Naive thymus-derived CD4-positive, alpha-beta T cell (primary cell): ENCODE measurements at regions of chr5 and their contacts with region 1.

Region 1: DNA sequence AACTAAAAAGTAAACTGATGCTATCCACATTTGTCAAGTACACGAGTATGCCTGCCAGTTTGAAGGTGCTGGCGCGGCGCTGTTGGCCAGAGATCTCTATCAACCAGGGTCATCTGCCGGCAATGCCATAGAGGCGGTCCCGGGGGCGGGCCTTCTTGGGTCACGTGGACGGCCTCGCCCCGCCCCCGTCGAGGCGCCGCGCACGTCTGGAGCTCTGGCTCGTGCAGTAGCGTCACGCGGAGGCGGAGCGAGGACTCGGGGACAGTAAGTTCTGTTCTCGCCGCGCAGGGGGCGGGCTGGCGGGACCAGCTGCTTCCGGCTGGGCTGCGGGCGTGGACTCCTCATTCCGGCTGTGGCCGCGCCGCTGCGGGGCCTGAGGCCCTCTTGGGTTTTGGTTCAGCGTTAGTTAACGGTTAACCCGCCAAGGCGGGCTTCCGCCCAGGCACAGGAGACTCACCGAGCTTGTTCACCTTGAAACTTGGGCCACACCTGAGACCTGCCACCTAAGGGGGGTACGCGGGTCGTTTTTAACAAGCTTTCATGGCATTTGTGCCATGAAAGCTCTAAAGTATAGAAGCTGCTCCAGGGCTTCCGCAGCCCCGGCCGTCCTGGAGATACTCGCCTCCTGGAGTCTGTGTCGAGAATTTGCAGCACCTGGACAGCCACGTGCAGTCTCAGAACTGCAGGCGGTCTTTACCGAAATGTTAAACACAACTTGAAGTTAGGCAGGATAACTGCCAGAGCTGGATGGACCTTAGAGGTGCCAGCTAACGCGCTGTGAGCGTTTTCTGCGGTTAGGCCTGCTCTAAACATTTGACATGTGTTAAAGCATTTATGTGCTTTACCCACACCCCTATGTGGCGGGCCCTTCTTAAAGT is at the start of gene RFESD:
- DNase-seq: peak; percentile 84 to 94 (median 90)
- ATAC-seq: peak; percentile 98
- H3K4me3 ChIP-seq: peak within 1 kb of the TSS; percentile 80
- H3K4me3 Mint-ChIP-seq: peak within 1 kb of the TSS; percentile 84 to 93 (median 88)
- H3K27ac ChIP-seq: peak within 1 kb of the TSS; percentile 80
- H3K27ac Mint-ChIP-seq: peak within 1 kb of the TSS; percentile 71 to 95 (median 89)
- H3K4me1 ChIP-seq: peaks cover 0 to 18% of the 10 kb centered on the region in 2 donors
- H3K4me1 Mint-ChIP-seq: peaks cover 7 to 53% (median 40%) of the 10 kb centered on the region in 7 donors
- H3K27me3 ChIP-seq: no peaks in the 10 kb centered on the region
- H3K27me3 Mint-ChIP-seq: no peaks in the 10 kb centered on the region
- total RNA-seq, gene RFESD: 2.2 to 9.2 (median 6.5) TPM

Region 2: DNA sequence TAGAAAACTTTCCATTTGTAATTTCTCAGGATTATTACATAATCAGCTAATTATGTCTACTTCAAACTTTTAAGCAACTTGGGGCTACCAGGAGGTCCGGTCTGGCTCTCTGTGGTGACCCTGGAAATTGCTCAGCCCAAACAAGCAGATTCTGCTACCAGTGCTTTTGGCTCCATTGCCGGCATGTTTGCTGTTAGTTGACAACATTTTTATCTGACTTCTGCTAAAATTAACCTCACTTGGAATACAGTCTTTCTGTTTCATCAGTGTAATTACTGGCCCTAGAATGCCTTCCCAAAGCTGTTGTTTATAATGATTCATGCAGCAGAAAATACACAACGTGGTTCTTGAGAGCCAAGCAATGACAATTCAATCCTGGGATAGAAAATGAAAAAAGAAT is 294.1 kb before region 1 on chr5:
- CTCF ChIA-PET with region 1: no interaction called
- POLR2A ChIA-PET with region 1: no interaction called
- intact Hi-C with region 1: no loop called
- DNase-seq: no peak
- ATAC-seq: no peak
- H3K4me3 ChIP-seq: no peak overlapping the region
- H3K4me3 Mint-ChIP-seq: no peak overlapping the region
- H3K27ac ChIP-seq: no peak overlapping the region
- H3K27ac Mint-ChIP-seq: no peak overlapping the region
- H3K4me1 ChIP-seq: no peaks in the 10 kb centered on the region
- H3K4me1 Mint-ChIP-seq: no peaks in the 10 kb centered on the region
- H3K27me3 ChIP-seq: no peaks in the 10 kb centered on the region
- H3K27me3 Mint-ChIP-seq: peaks cover 0 to 21% (median 0%) of the 10 kb centered on the region in 5 donors

Region 3: DNA sequence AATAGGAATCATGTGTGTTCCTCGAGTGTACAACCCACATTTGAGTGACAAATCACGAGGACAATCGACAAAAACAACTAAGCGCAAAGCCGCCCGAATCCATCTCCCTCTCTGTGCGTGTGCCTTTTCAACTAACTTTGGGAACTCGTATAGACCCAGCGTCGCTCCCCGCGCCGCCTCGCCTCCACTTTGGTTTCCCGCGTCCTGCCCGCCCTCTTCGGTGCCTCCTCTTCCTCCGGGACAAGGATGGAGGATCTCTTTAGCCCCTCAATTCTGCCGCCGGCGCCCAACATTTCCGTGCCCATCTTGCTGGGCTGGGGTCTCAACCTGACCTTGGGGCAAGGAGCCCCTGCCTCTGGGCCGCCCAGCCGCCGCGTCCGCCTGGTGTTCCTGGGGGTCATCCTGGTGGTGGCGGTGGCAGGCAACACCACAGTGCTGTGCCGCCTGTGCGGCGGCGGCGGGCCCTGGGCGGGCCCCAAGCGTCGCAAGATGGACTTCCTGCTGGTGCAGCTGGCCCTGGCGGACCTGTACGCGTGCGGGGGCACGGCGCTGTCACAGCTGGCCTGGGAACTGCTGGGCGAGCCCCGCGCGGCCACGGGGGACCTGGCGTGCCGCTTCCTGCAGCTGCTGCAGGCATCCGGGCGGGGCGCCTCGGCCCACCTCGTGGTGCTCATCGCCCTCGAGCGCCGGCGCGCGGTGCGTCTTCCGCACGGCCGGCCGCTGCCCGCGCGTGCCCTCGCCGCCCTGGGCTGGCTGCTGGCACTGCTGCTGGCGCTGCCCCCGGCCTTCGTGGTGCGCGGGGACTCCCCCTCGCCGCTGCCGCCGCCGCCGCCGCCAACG is 26.5 kb before region 1 on chr5 and contains the start of gene GPR150:
- CTCF ChIA-PET with region 1: interaction called, 31 read pairs
- POLR2A ChIA-PET with region 1: interaction called, 67 read pairs
- intact Hi-C with region 1: loop called (anchors 1 kb)
- DNase-seq: peak; percentile 44 to 67 (median 61)
- ATAC-seq: peak; percentile 77
- H3K4me3 ChIP-seq: peak within 1 kb of the TSS; percentile 75
- H3K4me3 Mint-ChIP-seq: peak within 1 kb of the TSS; percentile 88 to 96 (median 92)
- H3K27ac ChIP-seq: peak within 1 kb of the TSS; percentile 71
- H3K27ac Mint-ChIP-seq: peak within 1 kb of the TSS; percentile 60 to 87 (median 81)
- H3K4me1 ChIP-seq: peaks cover 22 to 46% of the 10 kb centered on the region in 2 donors
- H3K4me1 Mint-ChIP-seq: peaks cover 34 to 82% (median 67%) of the 10 kb centered on the region in 7 donors
- H3K27me3 ChIP-seq: no peaks in the 10 kb centered on the region
- H3K27me3 Mint-ChIP-seq: peaks cover 0 to 18% (median 0%) of the 10 kb centered on the region in 5 donors
- total RNA-seq, gene GPR150: 0.48 to 1.5 (median 1.1) TPM

Region 4: DNA sequence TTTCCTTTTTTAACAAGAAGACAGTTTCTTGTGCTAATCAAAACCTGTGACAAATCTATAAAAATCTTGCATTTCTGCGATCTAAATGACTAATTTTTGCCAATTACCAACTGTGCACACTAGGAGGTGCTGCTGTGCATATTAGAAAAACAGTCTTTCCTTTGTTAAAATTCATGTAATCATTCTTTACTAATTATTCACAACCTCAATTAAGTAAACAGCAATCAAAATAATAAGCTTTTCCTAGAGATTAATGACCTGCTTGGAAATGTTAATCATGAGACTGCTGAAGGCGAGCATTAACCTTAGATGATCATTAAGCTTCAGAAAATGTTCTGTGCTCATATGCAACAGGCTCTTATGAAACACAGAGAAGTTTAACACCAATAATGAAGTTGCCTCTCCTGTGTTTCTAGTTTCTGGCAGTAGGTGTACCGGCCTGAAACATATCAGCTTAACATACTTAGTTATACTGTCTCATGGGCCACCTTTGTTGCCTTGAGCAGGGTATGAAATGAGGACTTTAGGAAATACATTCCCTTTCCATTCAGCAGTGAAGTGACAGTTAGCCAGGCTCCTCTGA is 17.5 kb after region 1 on chr5:
- CTCF ChIA-PET with region 1: interaction called, 4 read pairs
- POLR2A ChIA-PET with region 1: no interaction called
- intact Hi-C with region 1: loop called (anchors 1 kb)
- DNase-seq: peak in 5 of 9 donors; percentile 31 to 49 (median 41)
- ATAC-seq: peak; percentile 65
- H3K4me3 ChIP-seq: no peak overlapping the region
- H3K4me3 Mint-ChIP-seq: no peak overlapping the region
- H3K27ac ChIP-seq: no peak overlapping the region
- H3K27ac Mint-ChIP-seq: no peak overlapping the region
- H3K4me1 ChIP-seq: peaks cover 0 to 5% of the 10 kb centered on the region in 2 donors
- H3K4me1 Mint-ChIP-seq: peaks cover 0 to 8% (median 3%) of the 10 kb centered on the region in 7 donors
- H3K27me3 ChIP-seq: no peaks in the 10 kb centered on the region
- H3K27me3 Mint-ChIP-seq: peaks cover 0 to 8% (median 0%) of the 10 kb centered on the region in 5 donors

Region 5: GRCh38 chr5:95760273-95761191 is 113.7 kb after region 1 on chr5:
- CTCF ChIA-PET with region 1: no interaction called
- POLR2A ChIA-PET with region 1: interaction called, 3 read pairs
- intact Hi-C with region 1: loop called (anchors 5 kb)
- DNase-seq: peak in 7 of 9 donors; percentile 3 to 45 (median 32)
- ATAC-seq: peak; percentile 83
- H3K4me3 ChIP-seq: peak overlapping the region; percentile 50
- H3K4me3 Mint-ChIP-seq: peak overlapping the region; percentile 70 to 86 (median 82)
- H3K27ac ChIP-seq: peak overlapping the region; percentile 58
- H3K27ac Mint-ChIP-seq: peak overlapping the region; percentile 75 to 92 (median 90)
- H3K4me1 ChIP-seq: peaks cover 0 to 27% of the 10 kb centered on the region in 2 donors
- H3K4me1 Mint-ChIP-seq: peaks cover 11 to 46% (median 32%) of the 10 kb centered on the region in 7 donors
- H3K27me3 ChIP-seq: no peaks in the 10 kb centered on the region
- H3K27me3 Mint-ChIP-seq: peaks cover 0 to 44% (median 0%) of the 10 kb centered on the region in 5 donors

Region 6: DNA sequence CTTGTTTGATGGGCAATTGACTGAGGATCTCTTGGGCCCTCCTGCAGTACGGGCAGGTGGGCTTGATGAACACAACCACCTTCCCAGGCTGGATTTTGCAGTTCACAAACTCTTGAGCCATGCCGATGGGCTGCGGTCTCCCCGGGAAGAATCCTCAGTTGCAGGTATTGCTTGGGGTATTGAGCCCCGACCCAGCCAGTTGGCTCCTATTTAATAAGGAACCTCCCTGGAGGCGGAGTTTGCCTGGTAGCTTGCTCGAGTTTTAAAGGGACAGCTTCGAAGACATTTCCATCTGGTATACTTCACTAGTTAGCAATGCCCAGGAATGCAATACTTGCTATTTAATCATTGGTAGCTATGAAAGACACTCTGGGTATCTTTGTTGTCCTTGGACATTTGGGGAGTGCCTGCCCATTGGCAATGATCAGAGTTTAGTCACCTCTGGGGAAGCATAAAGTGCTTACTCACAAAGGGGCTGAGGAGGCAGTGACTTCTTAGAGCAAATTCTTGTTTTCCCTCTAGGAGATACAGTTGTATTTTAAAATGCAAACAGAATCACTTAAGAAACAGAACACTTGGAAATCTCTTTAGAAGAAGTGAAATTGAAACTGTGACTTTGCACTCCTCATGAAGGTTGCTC is 175.9 kb after region 1 on chr5 and contains the start of gene GLRX:
- CTCF ChIA-PET with region 1: interaction called, 5 read pairs
- POLR2A ChIA-PET with region 1: interaction called, 11 read pairs
- intact Hi-C with region 1: loop called (anchors 1 kb)
- DNase-seq: peak in 8 of 9 donors; percentile 48 to 62 (median 58)
- ATAC-seq: peak; percentile 52
- H3K4me3 ChIP-seq: peak within 1 kb of the TSS; percentile 93
- H3K4me3 Mint-ChIP-seq: peak within 1 kb of the TSS; percentile 91 to 100 (median 99)
- H3K27ac ChIP-seq: peak within 1 kb of the TSS; percentile 84
- H3K27ac Mint-ChIP-seq: peak within 1 kb of the TSS; percentile 91 to 97 (median 95)
- H3K4me1 ChIP-seq: peaks cover 38% of the 10 kb centered on the region in 2 donors
- H3K4me1 Mint-ChIP-seq: peaks cover 53 to 78% (median 61%) of the 10 kb centered on the region in 7 donors
- H3K27me3 ChIP-seq: no peaks in the 10 kb centered on the region
- H3K27me3 Mint-ChIP-seq: no peaks in the 10 kb centered on the region
- total RNA-seq, gene GLRX: 26.3 to 89.5 (median 55.6) TPM

Region 7: DNA sequence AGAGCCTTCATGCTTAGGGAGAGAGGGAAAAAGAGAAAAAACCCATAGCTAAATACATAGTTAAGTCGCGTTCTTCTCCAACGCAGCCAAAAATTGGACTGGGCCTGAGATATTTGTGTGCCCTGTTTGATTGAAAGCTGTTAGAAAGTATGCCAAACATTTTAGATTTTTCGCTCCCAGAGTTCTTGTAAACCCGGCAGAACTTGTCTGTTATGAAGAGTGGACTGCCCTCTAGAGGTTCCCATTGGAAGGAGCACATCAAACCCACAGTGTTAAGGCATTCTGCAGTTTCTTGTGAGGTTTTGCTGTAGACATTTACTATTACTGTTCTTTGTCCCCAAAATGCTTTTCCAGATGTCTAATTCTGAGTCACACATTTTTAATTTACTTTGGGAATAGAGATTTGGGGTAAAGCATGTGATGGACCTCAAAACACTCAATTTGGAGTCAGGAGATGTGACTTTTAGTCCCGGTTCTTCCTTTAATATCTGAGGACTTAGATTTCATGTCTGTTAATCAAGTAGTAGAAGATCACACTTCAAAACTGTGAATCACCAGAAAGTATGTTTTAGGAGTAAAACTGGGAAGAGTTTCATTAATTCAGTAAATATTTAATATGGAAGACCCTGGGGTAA is 689.7 kb after region 1 on chr5:
- CTCF ChIA-PET with region 1: interaction called, 3 read pairs
- POLR2A ChIA-PET with region 1: no interaction called
- intact Hi-C with region 1: loop called in 1 of 2 experiments (anchors 1 kb)
- DNase-seq: peak in 8 of 9 donors; percentile 41 to 72 (median 65)
- ATAC-seq: peak; percentile 92
- H3K4me3 ChIP-seq: no peak overlapping the region
- H3K4me3 Mint-ChIP-seq: no peak overlapping the region
- H3K27ac ChIP-seq: no peak overlapping the region
- H3K27ac Mint-ChIP-seq: no peak overlapping the region
- H3K4me1 ChIP-seq: no peaks in the 10 kb centered on the region
- H3K4me1 Mint-ChIP-seq: peaks cover 0 to 9% (median 0%) of the 10 kb centered on the region in 7 donors
- H3K27me3 ChIP-seq: no peaks in the 10 kb centered on the region
- H3K27me3 Mint-ChIP-seq: peaks cover 7 to 26% (median 14%) of the 10 kb centered on the region in 5 donors

Region 8: GRCh38 chr5:96816411-96816939 is 1169.7 kb after region 1 on chr5:
- CTCF ChIA-PET with region 1: no interaction called
- POLR2A ChIA-PET with region 1: no interaction called
- intact Hi-C with region 1: loop called in 1 of 2 experiments (anchors 10 kb)
- DNase-seq: peak in 8 of 9 donors; percentile 37 to 85 (median 76)
- ATAC-seq: peak; percentile 91
- H3K4me3 ChIP-seq: peak overlapping the region; percentile 64
- H3K4me3 Mint-ChIP-seq: peak overlapping the region; percentile 65 to 93 (median 82)
- H3K27ac ChIP-seq: peak overlapping the region; percentile 70
- H3K27ac Mint-ChIP-seq: peak overlapping the region; percentile 74 to 100 (median 94)
- H3K4me1 ChIP-seq: peaks cover 29 to 59% of the 10 kb centered on the region in 2 donors
- H3K4me1 Mint-ChIP-seq: peaks cover 51 to 95% (median 89%) of the 10 kb centered on the region in 7 donors
- H3K27me3 ChIP-seq: no peaks in the 10 kb centered on the region
- H3K27me3 Mint-ChIP-seq: no peaks in the 10 kb centered on the region